Activated CD8-positive, alpha-beta T cell treated with anti-CD3 and anti-CD28 coated beads, Interleukin-2, amount 10 ng/mL, durations not matched to agents 7 days and 5 days (primary cell): ENCODE measurements at regions of chr20 and their contacts with region 1.

Region 1: DNA sequence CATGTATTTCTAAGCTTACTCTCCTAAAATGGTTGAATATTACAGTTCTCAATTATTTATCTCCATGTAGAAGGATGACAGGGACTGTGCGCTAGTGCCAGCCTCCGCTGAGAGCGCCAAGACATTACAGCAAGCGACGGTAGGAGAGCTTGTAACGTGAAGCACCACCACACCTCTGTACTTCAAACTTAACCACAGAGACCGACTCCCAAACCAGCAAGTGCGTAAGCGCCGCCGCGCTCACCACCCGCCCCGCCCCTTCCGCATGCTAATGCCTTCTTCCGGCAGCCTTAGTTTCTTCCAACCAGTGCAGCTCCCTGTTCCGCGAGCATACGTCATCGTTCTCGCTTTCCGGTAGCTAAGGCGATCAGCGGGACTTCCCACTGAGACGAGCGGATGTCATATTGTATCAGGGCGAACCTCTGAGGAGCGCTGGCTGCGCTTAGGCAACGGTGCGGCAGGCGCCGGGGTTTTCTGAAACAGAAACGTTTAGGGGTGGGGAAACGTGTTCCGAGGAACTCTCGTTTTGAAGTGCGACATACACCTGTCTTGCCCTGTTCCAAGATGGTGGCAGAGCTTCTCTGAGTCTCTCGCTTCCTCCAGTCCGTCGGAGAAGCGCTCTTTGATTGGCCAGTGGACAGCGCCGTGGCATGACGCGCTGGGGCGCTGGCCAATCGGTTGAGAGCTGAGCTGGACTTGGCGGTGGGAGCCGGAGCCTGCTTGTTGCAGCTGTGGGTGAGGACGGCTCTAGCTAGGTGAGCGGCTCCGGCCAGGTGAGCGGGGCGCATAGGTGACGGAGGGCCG is at the start of gene SEC23B:
- DNase-seq: peak; percentile 98
- ATAC-seq: peak; percentile 95
- H3K4me3 Mint-ChIP-seq: peak within 1 kb of the TSS; percentile 94
- H3K27ac Mint-ChIP-seq: peak within 1 kb of the TSS; percentile 99
- H3K4me1 Mint-ChIP-seq: peaks cover 53% of the 10 kb centered on the region
- H3K27me3 Mint-ChIP-seq: no peaks in the 10 kb centered on the region
- total RNA-seq, gene SEC23B: 59.6 to 63.9 TPM

Region 2: GRCh38 chr20:18412221-18412901 is 95.1 kb before region 1 on chr20:
- CTCF ChIA-PET with region 1: interaction called, 17 read pairs
- POLR2A ChIA-PET with region 1: no interaction called
- DNase-seq: no peak
- ATAC-seq: no peak
- H3K4me3 Mint-ChIP-seq: no peak overlapping the region
- H3K27ac Mint-ChIP-seq: no peak overlapping the region
- H3K4me1 Mint-ChIP-seq: peaks cover 10% of the 10 kb centered on the region
- H3K27me3 Mint-ChIP-seq: no peaks in the 10 kb centered on the region

Region 3: GRCh38 chr20:18466894-18467730 is 40.3 kb before region 1 on chr20 and contains the starts of genes DZANK1 and POLR3F:
- CTCF ChIA-PET with region 1: interaction called, 3 read pairs
- POLR2A ChIA-PET with region 1: interaction called, 45 read pairs
- DNase-seq: peak; percentile 94
- ATAC-seq: peak; percentile 98
- H3K4me3 Mint-ChIP-seq: peak within 1 kb of the TSS; percentile 96
- H3K27ac Mint-ChIP-seq: peak within 1 kb of the TSS; percentile 89
- H3K4me1 Mint-ChIP-seq: peaks cover 27% of the 10 kb centered on the region
- H3K27me3 Mint-ChIP-seq: no peaks in the 10 kb centered on the region
- total RNA-seq, gene DZANK1: 1.4 to 1.6 TPM
- total RNA-seq, gene POLR3F: 8.3 to 8.4 TPM

Region 4: DNA sequence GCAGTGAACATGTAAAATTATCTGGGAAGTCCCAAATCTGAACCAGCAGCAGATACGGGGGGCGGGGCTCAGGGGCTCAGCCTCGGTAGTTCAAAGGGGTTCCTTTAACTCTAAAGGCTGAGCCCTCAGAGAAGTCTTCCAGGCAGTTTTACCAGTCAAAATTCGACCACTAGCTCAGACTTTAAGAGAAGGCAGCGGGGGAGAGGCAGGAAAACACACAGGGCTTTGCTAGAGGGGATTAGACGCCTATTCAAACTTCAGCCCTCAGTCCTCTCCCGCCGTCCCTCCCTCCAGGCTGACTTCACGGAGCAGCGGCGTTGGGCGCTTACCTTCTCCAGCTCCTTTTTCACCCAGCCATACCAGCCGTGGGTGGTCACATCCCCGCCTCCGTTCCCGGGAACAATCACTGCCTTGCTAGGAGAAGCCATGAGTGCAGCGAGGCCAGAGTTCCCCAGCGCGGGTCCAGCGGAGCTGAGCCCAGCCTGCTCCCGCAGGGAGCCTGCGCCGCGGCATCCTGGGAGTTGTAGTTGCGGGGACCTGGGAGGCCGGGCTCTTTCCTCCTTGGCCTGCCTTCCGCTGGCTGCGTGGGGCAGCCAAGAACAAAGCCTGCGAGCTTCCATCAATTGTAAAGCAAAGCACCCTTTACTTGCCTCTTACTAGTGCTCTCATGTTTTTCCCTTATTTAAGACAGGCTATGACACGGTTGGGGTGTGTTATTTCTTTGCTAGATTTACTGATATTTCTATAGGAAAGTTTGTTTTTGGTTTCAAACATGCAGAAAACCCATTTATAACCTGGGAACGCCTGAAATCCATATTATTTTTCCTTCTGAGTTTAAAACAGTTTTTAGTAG is 10.5 kb before region 1 on chr20 and contains the start of gene RBBP9:
- CTCF ChIA-PET with region 1: interaction called, 34 read pairs
- POLR2A ChIA-PET with region 1: interaction called, 54 read pairs
- DNase-seq: peak; percentile 81
- ATAC-seq: peak; percentile 100
- H3K4me3 Mint-ChIP-seq: peak within 1 kb of the TSS; percentile 95
- H3K27ac Mint-ChIP-seq: peak within 1 kb of the TSS; percentile 83
- H3K4me1 Mint-ChIP-seq: peaks cover 22% of the 10 kb centered on the region
- H3K27me3 Mint-ChIP-seq: no peaks in the 10 kb centered on the region
- total RNA-seq, gene RBBP9: 10.6 to 10.8 TPM